K562 (cell line): ENCODE measurements at regions of chr22 and their contacts with region 1.

Region 1: GRCh38 chr22:23315341-23315917 is 135.1 kb downstream of the BCR start:
- DNase-seq: peak; percentile 80 to 87 (median 82)
- ATAC-seq: peak; percentile 48; the same call in 1 of the 3 replicates
- H3K4me3 ChIP-seq: no peak overlapping the region
- H3K27ac ChIP-seq: no peak overlapping the region
- H3K4me1 ChIP-seq: peaks cover 0 to 2% of the 10 kb centered on the region in 2 experiments; a peak in 1 of 5 replicates
- H3K27me3 ChIP-seq: no peaks in the 10 kb centered on the region
- CTCF ChIP-seq: peak; percentile 67 to 70 (median 68)
- EP300 ChIP-seq: no peak
- POLR2A ChIP-seq: no peak
- RAD21 ChIP-seq: no peak

Region 2: DNA sequence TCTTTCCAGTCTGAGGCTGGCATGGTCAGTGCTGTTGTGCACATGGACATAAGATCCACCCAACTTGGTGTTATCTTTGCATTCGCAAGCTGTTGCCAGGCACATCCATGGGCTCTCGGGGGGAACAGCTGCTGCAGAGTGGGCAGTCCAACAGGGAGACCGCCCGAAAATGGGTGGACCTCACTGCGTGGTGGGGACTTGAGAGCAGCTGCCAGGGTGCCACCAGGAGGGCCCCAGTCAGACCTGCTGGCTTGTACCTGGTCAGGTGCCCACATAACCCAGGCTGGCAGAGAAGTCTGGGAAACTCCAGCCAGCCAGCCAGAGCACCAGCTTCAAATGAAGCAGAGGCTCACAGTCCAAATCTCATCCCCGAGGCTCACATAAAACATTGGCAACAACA is 15.0 kb before region 1 on chr22:
- CTCF ChIA-PET with region 1: no interaction called
- POLR2A ChIA-PET with region 1: no interaction called
- in situ Hi-C with region 1: no loop called
- intact Hi-C with region 1: no loop called
- DNase-seq: no peak
- ATAC-seq: no peak
- H3K4me3 ChIP-seq: no peak overlapping the region
- H3K27ac ChIP-seq: no peak overlapping the region
- H3K4me1 ChIP-seq: peaks cover 0 to 5% of the 10 kb centered on the region in 2 experiments; a peak in 2 of 5 replicates
- H3K27me3 ChIP-seq: no peaks in the 10 kb centered on the region
- CTCF ChIP-seq: no peak
- EP300 ChIP-seq: no peak
- POLR2A ChIP-seq: no peak
- RAD21 ChIP-seq: no peak

Region 3: GRCh38 chr22:23478201-23478600 is 162.8 kb after region 1 on chr22:
- CTCF ChIA-PET with region 1: no interaction called
- POLR2A ChIA-PET with region 1: no interaction called
- in situ Hi-C with region 1: no loop called
- intact Hi-C with region 1: no loop called
- DNase-seq: peak in 3 of 4 experiments; percentile 10 to 49 (median 11)
- ATAC-seq: no peak
- H3K4me3 ChIP-seq: no peak overlapping the region
- H3K27ac ChIP-seq: no peak overlapping the region
- H3K4me1 ChIP-seq: no peaks in the 10 kb centered on the region; a peak in 1 of 5 replicates
- H3K27me3 ChIP-seq: no peaks in the 10 kb centered on the region; a peak in 1 of 5 replicates
- CTCF ChIP-seq: no peak
- EP300 ChIP-seq: no peak
- POLR2A ChIP-seq: no peak
- RAD21 ChIP-seq: no peak

Region 4: GRCh38 chr22:23857606-23858483 is 542.4 kb after region 1 on chr22 and contains the start of gene SLC2A11:
- CTCF ChIA-PET with region 1: no interaction called
- POLR2A ChIA-PET with region 1: interaction called, 3 read pairs
- in situ Hi-C with region 1: loop called (anchors 25 kb)
- intact Hi-C with region 1: no loop called
- DNase-seq: peak; percentile 84 to 96 (median 90)
- ATAC-seq: peak; percentile 99
- H3K4me3 ChIP-seq: peak within 1 kb of the TSS; percentile 51
- H3K27ac ChIP-seq: peak within 1 kb of the TSS; percentile 38
- H3K4me1 ChIP-seq: peaks cover 0 to 19% of the 10 kb centered on the region in 2 experiments; a peak in 3 of 5 replicates
- H3K27me3 ChIP-seq: no peaks in the 10 kb centered on the region
- CTCF ChIP-seq: peak in 2 of 3 experiments; percentile 8 to 18; a peak in 2 of 6 replicates
- EP300 ChIP-seq: no peak
- POLR2A ChIP-seq: peak; percentile 82
- RAD21 ChIP-seq: no peak
- polyA plus RNA-seq, gene SLC2A11: 0.44 to 0.73 TPM